Dendritic cell treated with granulocyte-macrophage colony-stimulating factor and Interleukin-4, amounts not matched to agents 40 ng/mL and 50 ng/mL, for 4 days (primary cell): ENCODE measurements at regions of chr4 and their contacts with region 1.

Region 1: DNA sequence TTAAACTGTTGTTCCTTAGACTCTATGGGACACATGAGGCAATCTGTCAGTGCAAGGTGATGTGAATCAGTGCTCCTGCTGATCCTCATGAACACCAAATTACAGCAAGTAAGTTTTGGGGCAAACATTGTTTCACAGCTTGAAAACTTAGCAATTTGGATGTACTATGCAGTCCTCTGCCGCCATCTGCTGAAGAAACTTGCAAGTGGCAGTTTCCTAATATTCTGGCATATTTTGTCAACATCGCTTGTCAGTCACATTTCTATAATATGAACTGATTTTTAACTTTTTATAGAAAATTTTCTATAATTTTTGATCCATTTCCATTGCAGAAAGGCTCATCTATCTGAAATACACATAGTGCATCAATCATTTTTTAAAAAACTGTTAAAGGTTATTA is 56.3 kb downstream of the ZAR1 start:
- H3K4me3 Mint-ChIP-seq: no peak overlapping the region
- H3K27ac Mint-ChIP-seq: no peak overlapping the region
- H3K4me1 Mint-ChIP-seq: no peaks in the 10 kb centered on the region
- H3K27me3 Mint-ChIP-seq: no peaks in the 10 kb centered on the region

Region 2: DNA sequence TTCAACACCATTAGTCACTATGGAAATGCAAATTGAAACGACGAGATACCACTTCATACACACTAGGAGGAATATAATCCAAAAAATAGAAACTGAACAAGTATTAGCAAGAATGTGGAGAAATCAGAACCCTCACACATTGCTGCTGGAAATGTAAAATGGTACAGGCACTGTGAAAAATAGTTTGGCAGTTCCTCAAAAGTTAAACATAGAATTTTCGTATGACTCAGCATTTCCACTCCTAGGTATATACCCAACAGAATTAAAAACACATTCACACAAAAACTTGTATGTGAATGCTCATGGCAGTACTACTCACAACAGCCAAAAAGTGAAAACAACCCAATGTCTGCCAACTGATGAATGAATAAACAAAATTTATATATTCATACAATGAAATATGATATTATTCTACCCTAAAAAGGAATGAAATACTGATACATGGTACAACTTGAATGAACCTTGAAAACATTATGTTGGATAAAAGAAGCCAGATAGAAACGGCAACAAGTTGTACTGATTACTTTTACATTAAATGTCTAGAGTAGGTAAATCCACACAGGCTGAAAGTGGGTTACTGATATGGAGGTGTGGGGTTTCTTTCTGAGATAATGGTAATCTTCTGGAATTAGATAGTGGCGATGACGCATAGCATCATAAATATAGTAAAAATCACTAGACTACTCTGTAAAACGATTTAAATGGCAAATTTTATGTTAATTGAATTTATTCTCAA is 299.0 kb before region 1 on chr4:
- intact Hi-C with region 1: no loop called
- H3K4me3 Mint-ChIP-seq: no peak overlapping the region
- H3K27ac Mint-ChIP-seq: no peak overlapping the region
- H3K4me1 Mint-ChIP-seq: peaks cover 40% of the 10 kb centered on the region
- H3K27me3 Mint-ChIP-seq: no peaks in the 10 kb centered on the region

Region 3: DNA sequence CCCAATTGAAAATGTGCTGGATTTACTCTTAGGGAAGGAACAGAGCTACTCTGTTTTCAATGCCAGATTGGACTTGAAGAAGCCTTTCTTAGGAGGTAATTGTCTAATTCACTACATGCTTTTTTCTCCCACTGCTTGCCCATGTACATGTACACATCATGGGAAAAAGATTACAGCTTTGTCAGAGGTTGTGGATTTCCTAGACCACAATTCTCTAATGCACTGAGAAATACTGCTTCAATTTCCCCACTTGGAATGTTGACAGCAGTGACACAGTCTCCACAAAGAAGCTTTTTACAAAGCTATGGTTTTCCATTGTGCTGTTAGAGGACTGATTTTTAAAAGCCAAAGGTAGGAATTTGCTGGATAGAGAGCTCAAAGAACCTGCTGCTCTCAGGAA is 36.8 kb before region 1 on chr4:
- intact Hi-C with region 1: loop called (anchors 5 kb)
- H3K4me3 Mint-ChIP-seq: no peak overlapping the region
- H3K27ac Mint-ChIP-seq: no peak overlapping the region
- H3K4me1 Mint-ChIP-seq: no peaks in the 10 kb centered on the region
- H3K27me3 Mint-ChIP-seq: no peaks in the 10 kb centered on the region